Lower lobe of right lung (tissue), 2 donors: ENCODE measurements at regions of chr1 and their contacts with region 1.

Region 1: DNA sequence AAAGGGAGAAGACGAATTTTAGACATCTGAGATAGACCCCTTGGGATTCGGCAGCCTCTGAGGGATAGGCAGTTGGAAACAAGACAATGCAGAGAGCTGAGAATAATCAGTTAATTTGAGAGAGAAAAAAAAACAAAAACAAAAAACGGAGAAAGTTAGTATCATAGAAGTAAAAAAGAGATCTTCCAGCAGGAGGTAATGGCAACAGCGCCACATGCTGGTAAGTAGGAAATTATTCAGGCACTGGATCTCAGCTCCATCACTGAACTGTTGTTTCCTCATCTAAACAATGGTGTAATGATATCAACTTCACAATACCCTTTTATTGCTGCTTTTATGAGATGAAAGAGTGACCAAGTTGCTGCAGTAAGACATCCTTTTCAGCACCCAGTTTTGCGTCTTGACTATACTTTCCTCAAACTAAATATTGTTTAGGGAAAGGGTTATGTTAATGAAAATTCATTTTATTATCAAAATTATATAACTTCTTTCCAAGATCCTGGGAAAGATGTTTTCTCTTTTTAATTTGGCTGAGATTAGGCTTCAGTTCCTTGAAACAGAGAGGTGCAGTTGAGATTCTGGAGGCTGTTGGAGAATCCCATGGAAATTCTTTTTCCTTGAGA is 91.4 kb upstream of the KCNA3 start:
- DNase-seq: no peak
- ATAC-seq: peak; percentile 71 to 79
- H3K4me3 ChIP-seq: no peak overlapping the region
- H3K27ac ChIP-seq: no peak overlapping the region
- H3K4me1 ChIP-seq: peaks cover 7% of the 10 kb centered on the region
- H3K27me3 ChIP-seq: no peaks in the 10 kb centered on the region
- CTCF ChIP-seq: peak; percentile 79

Region 2: DNA sequence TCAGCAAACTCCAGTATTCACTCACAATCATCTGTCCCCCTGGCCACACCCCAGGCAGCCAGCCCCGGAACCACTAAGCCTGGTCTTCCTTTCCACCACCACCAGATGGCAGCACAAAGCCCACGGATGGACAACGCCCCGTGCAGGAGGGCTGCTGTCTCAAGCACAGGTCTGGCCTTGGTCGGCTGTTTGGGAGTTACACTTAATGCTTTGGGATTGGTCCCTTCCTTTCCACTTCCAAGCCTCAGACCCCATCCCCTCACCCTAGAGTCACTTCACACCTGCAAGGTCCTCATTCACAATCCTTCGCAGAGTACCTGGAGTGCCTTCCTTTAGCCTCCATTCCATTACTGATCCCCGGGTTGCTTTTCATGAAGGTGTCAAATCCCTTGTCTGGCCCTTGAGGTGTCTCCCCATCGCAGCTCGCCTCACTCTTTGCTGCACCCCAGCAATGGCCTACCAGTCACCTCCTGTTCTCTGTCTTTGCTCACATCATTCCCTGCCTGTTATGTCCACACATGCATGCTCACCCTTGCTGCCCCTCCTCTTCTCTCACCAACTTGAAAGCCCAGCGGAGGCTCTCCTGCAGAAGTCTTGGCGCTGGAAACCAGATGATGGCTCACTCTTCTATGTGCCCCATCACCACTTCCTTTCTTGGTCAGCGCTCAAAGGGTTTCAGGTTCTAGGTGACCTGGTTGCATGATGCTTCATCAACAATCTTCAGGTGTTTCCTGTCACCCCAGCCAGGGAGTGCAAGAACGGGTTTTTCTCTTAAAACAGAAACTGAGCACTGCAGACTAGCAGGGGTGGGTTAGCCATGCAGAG is 135.1 kb before region 1 on chr1:
- intact Hi-C with region 1: loop called (anchors 5 kb)
- DNase-seq: peak; percentile 81
- ATAC-seq: peak; percentile 88
- H3K4me3 ChIP-seq: no peak overlapping the region
- H3K27ac ChIP-seq: peak overlapping the region; percentile 37
- H3K4me1 ChIP-seq: peaks cover 24% of the 10 kb centered on the region
- H3K27me3 ChIP-seq: no peaks in the 10 kb centered on the region
- CTCF ChIP-seq: peak; percentile 90

Region 3: GRCh38 chr1:111127923-111128643 is 361.9 kb after region 1 on chr1:
- intact Hi-C with region 1: no loop called
- DNase-seq: no peak
- ATAC-seq: peak; percentile 51 to 68
- H3K4me3 ChIP-seq: no peak overlapping the region
- H3K27ac ChIP-seq: no peak overlapping the region
- H3K4me1 ChIP-seq: peaks cover 14% of the 10 kb centered on the region
- H3K27me3 ChIP-seq: no peaks in the 10 kb centered on the region
- CTCF ChIP-seq: no peak